WTC11 (cell line): ENCODE measurements at regions of chr11 and their contacts with region 1.

Region 1: GRCh38 chr11:66311965-66312548 is 4.8 kb downstream of the CD248 start:
- DNase-seq: peak; percentile 94
- ATAC-seq: peak; percentile 55
- H3K4me3 Mint-ChIP-seq: peak overlapping the region; percentile 87
- H3K27ac Mint-ChIP-seq: peak overlapping the region; percentile 99
- H3K4me1 Mint-ChIP-seq: peaks cover 13% of the 10 kb centered on the region
- H3K27me3 Mint-ChIP-seq: peaks cover 8% of the 10 kb centered on the region
- CTCF ChIP-seq: no peak; the same call in 1 of the 2 replicates

Region 2: GRCh38 chr11:66100272-66101065 is 211.6 kb before region 1 on chr11:
- CTCF ChIA-PET with region 1: no interaction called
- POLR2A ChIA-PET with region 1: no interaction called
- DNase-seq: no peak
- ATAC-seq: no peak
- H3K4me3 Mint-ChIP-seq: no peak overlapping the region
- H3K27ac Mint-ChIP-seq: peak overlapping the region; percentile 79
- H3K4me1 Mint-ChIP-seq: peaks cover 7% of the 10 kb centered on the region
- H3K27me3 Mint-ChIP-seq: no peaks in the 10 kb centered on the region
- CTCF ChIP-seq: no peak

Region 3: DNA sequence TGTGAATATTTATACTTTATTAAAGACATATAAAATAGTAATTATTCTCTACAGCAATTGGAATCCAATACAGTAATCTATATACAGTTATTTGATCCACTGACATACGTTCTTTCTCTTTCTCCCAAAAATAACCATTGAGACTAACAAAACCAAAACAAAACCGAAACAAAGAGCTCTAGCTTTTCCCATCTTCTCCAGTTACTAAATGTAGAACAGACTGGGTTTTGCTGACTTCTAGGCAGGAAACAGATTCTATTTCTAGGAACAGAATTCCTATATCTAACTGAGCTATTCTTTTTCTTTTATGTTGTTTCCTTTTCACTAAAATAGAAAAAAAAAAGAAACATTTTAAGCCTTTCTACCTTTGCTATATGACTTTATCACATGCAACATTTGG is 161.9 kb before region 1 on chr11:
- CTCF ChIA-PET with region 1: no interaction called
- POLR2A ChIA-PET with region 1: no interaction called
- DNase-seq: no peak
- ATAC-seq: no peak
- H3K4me3 Mint-ChIP-seq: no peak overlapping the region
- H3K27ac Mint-ChIP-seq: no peak overlapping the region; the same call in 1 of the 2 replicates
- H3K4me1 Mint-ChIP-seq: peaks cover 5% of the 10 kb centered on the region; the same call in 1 of the 2 replicates
- H3K27me3 Mint-ChIP-seq: no peaks in the 10 kb centered on the region
- CTCF ChIP-seq: no peak

Region 4: DNA sequence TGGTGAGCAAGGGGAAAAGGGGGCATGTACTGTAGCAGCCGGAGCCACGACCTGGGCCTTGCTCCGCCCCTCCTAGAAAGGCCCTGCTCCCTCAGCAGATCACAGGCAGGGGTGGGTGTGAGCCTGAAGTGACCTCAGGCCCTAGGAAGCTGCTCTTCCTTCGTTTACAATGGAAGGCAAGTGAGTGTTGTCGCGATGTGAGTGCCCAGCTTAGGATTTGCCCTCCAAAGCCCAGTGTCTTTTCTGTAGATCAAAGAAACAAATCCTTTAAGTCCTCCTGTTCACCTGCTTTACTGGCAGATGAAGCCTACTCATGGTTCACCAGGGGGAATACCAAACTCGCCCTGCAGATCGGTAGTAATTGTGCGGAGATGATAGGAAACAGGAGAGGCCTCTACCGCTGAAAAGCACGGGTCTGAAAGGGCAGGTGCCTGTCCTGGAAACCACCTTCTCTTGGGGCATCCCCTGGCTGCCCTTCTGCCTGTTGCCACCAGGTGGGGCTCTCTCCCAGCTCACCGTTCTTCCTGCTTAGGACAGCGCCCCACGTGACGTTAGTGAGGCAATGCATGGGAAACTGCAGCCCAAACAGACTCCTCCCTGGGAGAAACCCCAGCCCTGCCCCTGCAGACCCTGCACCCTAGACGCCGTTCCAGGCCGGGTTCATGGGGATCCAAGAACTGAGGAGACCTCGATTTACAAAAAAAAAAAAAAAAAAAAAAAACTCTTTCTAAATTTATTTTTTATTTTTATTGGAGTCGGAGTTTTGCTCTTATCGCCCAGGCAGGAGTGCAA is 89.5 kb before region 1 on chr11:
- CTCF ChIA-PET with region 1: interaction called, 17 read pairs
- POLR2A ChIA-PET with region 1: interaction called, 5 read pairs
- DNase-seq: peak; percentile 94
- ATAC-seq: peak; percentile 96
- H3K4me3 Mint-ChIP-seq: no peak overlapping the region
- H3K27ac Mint-ChIP-seq: peak overlapping the region; percentile 58
- H3K4me1 Mint-ChIP-seq: peaks cover 8% of the 10 kb centered on the region
- H3K27me3 Mint-ChIP-seq: no peaks in the 10 kb centered on the region
- CTCF ChIP-seq: peak; percentile 100

Region 5: GRCh38 chr11:66288671-66289547 is 23.1 kb before region 1 on chr11 and contains the start of gene YIF1A:
- CTCF ChIA-PET with region 1: interaction called, 65 read pairs
- POLR2A ChIA-PET with region 1: interaction called, 19 read pairs
- DNase-seq: peak; percentile 98
- ATAC-seq: peak; percentile 95
- H3K4me3 Mint-ChIP-seq: peak within 1 kb of the TSS; percentile 96
- H3K27ac Mint-ChIP-seq: peak within 1 kb of the TSS; percentile 96
- H3K4me1 Mint-ChIP-seq: peaks cover 20% of the 10 kb centered on the region
- H3K27me3 Mint-ChIP-seq: peaks cover 37% of the 10 kb centered on the region
- CTCF ChIP-seq: no peak
- total RNA-seq, gene YIF1A: 86.0 to 86.9 TPM (median 86.4 TPM) in 3 replicates

Region 6: DNA sequence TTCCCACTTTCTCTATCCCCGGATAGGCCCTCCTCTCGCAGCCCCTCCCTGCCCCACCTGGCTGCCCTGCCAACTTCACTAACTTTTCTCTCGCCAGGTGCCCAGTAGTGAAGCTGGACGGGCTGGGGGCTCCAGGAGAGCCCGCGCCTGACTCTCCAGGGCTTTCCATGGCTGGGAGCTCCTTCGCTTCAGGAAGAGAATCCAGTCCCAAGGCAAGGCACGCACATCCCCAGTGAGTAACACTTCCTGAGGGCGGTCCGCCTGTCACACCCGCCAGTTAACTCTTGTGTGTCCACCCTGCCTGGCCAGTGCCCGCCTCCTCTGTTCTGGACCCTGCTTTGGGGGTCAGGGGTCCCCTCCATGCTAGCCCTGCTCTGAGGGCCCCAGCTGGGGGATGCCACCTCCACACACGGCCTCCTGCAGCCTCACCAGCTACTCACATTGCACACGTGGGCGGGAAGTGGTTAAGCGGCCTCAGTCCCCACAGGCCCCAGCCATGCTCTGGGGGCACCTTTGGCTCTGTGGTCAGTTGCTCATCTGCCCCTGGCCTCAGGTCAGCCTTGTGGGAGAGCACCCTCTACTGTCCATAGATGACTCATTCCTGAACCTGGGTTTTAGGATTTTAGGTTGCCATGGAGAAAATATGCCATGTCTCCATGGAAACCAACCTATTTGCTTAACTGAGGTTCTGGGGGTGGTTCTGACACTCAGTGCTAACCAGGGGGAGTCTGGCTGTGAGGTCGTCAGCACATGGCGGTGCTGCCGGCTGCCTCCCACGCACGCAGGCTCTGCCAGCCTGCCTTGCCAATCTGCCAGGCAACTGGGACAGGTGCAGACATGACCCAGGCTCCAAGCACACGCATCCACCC is 24.4 kb after region 1 on chr11 and contains the start of gene RIN1:
- CTCF ChIA-PET with region 1: interaction called, 319 read pairs
- POLR2A ChIA-PET with region 1: interaction called, 20 read pairs
- DNase-seq: peak; percentile 57
- ATAC-seq: peak; percentile 70
- H3K4me3 Mint-ChIP-seq: peak within 1 kb of the TSS; percentile 82
- H3K27ac Mint-ChIP-seq: 0 out of 2 replicates have a peak within 1 kb of the TSS, but pooled peaks have one; percentile 78
- H3K4me1 Mint-ChIP-seq: peaks cover 16% of the 10 kb centered on the region
- H3K27me3 Mint-ChIP-seq: no peaks in the 10 kb centered on the region
- CTCF ChIP-seq: no peak
- total RNA-seq, gene RIN1: 4.7 to 5.5 TPM (median 5.0 TPM) in 3 replicates

Region 7: GRCh38 chr11:66371627-66372415 is 59.8 kb after region 1 on chr11 and contains the start of gene SLC29A2:
- CTCF ChIA-PET with region 1: interaction called, 17 read pairs
- POLR2A ChIA-PET with region 1: interaction called, 12 read pairs
- DNase-seq: peak; percentile 98
- ATAC-seq: peak; percentile 88
- H3K4me3 Mint-ChIP-seq: peak within 1 kb of the TSS; percentile 95
- H3K27ac Mint-ChIP-seq: peak within 1 kb of the TSS; percentile 96
- H3K4me1 Mint-ChIP-seq: peaks cover 27% of the 10 kb centered on the region
- H3K27me3 Mint-ChIP-seq: no peaks in the 10 kb centered on the region
- CTCF ChIP-seq: no peak
- total RNA-seq, gene SLC29A2: 30.2 to 36.6 TPM (median 35.3 TPM) in 3 replicates

Region 8: GRCh38 chr11:66466225-66467027 is 154.4 kb after region 1 on chr11 and contains the start of gene PELI3:
- CTCF ChIA-PET with region 1: interaction called, 11 read pairs
- POLR2A ChIA-PET with region 1: interaction called, 3 read pairs
- DNase-seq: peak; percentile 98
- ATAC-seq: peak; percentile 94
- H3K4me3 Mint-ChIP-seq: peak within 1 kb of the TSS; percentile 88
- H3K27ac Mint-ChIP-seq: peak within 1 kb of the TSS; percentile 90
- H3K4me1 Mint-ChIP-seq: peaks cover 43% of the 10 kb centered on the region
- H3K27me3 Mint-ChIP-seq: no peaks in the 10 kb centered on the region; the same call in 1 of the 2 replicates
- CTCF ChIP-seq: no peak
- total RNA-seq, gene PELI3: 6.7 to 7.8 TPM (median 6.8 TPM) in 3 replicates